ENCODE measurements at regions of chr5 and their contacts with region 1.

Region 1: DNA sequence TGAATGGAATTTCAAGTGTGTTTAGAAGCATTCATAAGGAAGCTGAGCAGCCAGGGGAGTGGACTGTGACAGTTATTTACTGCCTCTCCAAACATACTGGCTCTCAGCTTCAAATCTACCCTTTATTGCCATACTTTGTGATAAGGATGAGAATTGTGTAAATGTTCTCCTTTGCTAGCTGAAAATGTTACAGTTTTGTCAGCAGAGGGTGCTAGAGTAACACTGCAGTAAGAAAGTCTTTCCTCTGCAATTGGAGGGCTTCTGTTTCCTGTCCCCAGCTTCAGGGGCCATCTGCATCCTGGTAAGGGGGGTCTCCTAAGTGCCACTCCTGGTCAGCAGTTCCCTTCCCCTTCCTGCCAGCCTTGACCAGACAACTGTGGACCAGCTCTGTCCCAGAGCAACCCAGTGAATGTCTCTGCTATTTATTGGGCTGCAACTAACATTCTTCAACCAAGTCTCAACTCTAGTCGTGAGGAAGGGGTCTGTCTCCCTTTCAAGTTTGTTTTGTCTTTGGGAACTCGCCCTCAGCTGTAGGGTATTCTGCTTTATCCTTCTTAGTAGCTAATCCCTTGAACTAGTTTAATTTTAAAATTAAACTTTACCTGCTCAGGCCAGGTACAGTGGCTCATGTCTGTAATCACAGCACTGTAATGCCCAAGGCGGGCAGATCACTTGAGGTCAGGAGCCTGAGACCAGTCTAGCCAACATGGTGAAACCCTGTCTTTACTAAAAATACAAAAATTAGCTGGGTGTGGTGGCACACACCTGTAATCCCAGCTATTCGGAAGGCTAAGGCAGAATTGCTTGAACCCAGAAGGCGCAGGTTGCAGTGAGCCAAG is 45.3 kb downstream of the RAPGEF6 start:
- DNase-seq: no peak
- H3K4me3 ChIP-seq: no peak overlapping the region
- H3K27ac ChIP-seq: no peak overlapping the region
- H3K27me3 ChIP-seq: no peaks in the 10 kb centered on the region
- CTCF ChIP-seq: peak; percentile 81

Region 2: DNA sequence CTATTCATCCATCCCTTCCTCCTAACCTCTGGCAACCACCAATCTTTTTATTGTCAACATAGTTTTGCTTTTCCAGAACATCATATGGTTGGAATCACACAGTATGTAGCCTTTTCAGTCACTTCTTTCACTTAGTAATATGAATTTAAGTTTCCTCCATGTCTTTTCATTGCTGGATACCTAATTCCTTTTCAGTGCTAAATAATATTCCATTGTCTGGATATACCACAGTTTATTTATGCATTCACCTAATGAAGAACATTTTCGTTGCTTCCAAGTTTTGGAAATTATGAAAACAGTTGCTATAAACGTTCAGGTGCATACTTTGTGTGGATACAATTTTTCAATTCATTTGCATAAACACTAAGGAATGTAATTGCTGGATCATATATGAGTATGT is 277.8 kb after region 1 on chr5:
- in situ Hi-C with region 1: no loop called
- DNase-seq: no peak
- H3K4me3 ChIP-seq: no peak overlapping the region
- H3K27ac ChIP-seq: no peak overlapping the region
- H3K27me3 ChIP-seq: no peaks in the 10 kb centered on the region
- CTCF ChIP-seq: no peak

Region 3: GRCh38 chr5:131957721-131958441 is 368.2 kb after region 1 on chr5:
- in situ Hi-C with region 1: no loop called
- DNase-seq: no peak
- H3K4me3 ChIP-seq: no peak overlapping the region
- H3K27ac ChIP-seq: no peak overlapping the region
- H3K27me3 ChIP-seq: no peaks in the 10 kb centered on the region
- CTCF ChIP-seq: no peak

Region 4: DNA sequence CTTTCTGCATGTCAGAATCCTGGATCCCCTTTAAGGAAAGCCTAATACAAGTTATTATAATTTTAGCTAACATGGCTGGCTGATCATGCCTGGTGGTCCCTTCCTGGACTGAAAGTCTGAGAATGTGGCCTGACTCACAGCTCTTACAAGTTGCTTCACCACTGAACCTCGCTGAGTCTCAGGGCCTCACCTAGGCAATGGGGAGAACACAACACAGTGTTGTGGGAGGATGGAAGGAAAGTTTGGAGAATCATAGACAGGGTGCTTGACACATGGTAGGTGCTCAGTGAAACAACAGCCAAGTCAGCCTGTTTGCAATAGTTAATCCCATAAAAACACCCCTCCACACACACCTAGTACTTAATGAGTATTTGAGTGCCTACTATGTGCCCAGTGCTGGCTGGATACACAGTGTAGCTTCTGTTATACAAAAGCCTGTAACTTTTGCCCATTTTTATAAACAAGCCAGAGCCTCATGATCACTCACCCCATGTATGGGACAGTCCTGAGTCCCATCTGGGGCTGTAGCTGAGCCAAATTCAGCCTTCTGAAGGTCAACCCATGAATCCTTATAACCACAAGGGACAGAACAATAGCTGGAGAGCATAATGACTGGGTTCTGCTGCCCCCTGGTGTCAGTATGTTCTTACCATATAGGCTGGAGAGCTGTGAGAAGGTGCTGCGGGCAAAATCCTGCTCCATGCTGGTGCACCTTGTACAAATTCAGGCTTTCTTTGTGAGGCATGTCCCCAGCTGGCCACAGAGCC is 417.9 kb after region 1 on chr5:
- in situ Hi-C with region 1: loop called (anchors 25 kb)
- DNase-seq: peak; percentile 87
- H3K4me3 ChIP-seq: no peak overlapping the region
- H3K27ac ChIP-seq: no peak overlapping the region
- H3K27me3 ChIP-seq: peaks cover 16% of the 10 kb centered on the region
- CTCF ChIP-seq: peak; percentile 80

Measured in brain microvascular endothelial cell (primary cell).